ENCODE measurements at regions of chr1 and their contacts with region 1.

Region 1: GRCh38 chr1:110460253-110461220 is 9.6 kb downstream of the PROK1 start:
- DNase-seq: peak; percentile 72
- H3K4me3 Mint-ChIP-seq: no peak overlapping the region
- H3K27ac Mint-ChIP-seq: no peak overlapping the region
- H3K4me1 Mint-ChIP-seq: no peaks in the 10 kb centered on the region
- H3K27me3 Mint-ChIP-seq: no peaks in the 10 kb centered on the region

Region 2: GRCh38 chr1:110312188-110313121 is 148.1 kb before region 1 on chr1:
- intact Hi-C with region 1: loop called (anchors 2 kb)
- DNase-seq: peak; percentile 50
- H3K4me3 Mint-ChIP-seq: no peak overlapping the region
- H3K27ac Mint-ChIP-seq: no peak overlapping the region
- H3K4me1 Mint-ChIP-seq: no peaks in the 10 kb centered on the region
- H3K27me3 Mint-ChIP-seq: no peaks in the 10 kb centered on the region

Region 3: DNA sequence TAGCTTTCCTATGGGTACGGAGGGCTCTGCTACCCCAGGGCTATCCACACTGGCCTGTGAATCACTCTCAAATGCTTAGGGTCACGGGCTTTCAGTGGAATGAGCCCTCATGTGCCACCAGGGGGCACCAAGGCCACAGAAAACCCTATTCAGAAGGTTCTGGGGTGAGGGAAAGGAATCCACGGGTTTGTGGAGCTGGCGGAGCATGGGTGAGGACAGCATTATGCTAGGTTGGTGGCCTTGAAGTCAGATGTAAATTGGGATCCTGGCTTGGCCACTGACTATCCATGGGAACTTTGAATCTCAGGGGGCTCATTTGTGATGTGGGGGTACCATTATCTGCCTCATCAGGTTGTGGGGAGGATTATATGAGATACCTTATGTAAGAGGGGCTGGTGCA is 48.0 kb before region 1 on chr1:
- intact Hi-C with region 1: loop called (anchors 1 kb)
- DNase-seq: peak; percentile 37
- H3K4me3 Mint-ChIP-seq: no peak overlapping the region
- H3K27ac Mint-ChIP-seq: no peak overlapping the region
- H3K4me1 Mint-ChIP-seq: peaks cover 11% of the 10 kb centered on the region
- H3K27me3 Mint-ChIP-seq: no peaks in the 10 kb centered on the region

Region 4: DNA sequence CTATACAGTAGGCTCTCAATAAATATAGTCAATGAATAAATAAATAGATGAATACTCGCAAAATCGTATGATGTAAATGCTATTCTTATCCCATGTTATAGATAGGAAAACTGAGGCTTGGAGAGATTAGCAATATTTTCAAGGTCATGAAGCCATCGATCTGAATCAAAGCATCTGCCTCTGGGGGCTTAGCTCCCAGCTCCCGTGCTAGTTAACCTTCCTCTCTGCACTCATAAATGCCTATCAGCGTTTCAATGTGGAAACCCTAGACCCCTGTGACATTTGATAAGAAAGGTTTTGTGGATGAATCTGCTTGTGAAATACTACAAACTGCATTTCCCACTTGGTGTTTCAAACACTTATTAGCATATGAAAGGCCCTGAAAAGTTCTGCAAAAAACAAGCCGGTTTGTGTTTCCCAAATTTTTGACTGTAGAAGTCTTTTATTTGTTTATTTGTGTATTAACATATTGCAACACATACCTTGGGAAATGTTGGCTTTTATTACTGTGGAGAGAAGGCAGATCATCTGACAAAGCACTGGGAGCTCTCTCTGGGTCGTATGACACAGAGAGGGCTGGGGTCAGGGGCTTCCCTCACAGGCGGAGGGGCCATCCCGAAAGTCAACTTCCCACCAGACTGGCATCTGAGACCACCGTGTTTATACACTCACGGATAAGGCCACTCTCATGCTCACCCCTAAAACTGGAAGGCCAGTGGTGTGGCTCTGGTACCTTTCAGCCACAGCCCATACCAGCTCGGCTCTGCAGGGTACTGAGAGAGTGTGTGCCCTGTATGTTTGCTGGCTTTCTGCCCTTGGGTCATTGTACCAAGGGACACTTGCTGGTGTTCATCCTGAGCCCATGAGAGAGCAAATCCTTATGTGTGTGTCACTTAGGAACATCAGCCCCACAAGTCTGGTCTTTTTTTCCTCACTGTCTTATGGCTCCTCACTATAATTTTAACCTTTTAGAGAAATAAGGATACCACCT is 10.6 kb before region 1 on chr1:
- intact Hi-C with region 1: no loop called
- DNase-seq: no peak
- H3K4me3 Mint-ChIP-seq: no peak overlapping the region
- H3K27ac Mint-ChIP-seq: no peak overlapping the region
- H3K4me1 Mint-ChIP-seq: no peaks in the 10 kb centered on the region
- H3K27me3 Mint-ChIP-seq: peaks cover 17% of the 10 kb centered on the region

Region 5: DNA sequence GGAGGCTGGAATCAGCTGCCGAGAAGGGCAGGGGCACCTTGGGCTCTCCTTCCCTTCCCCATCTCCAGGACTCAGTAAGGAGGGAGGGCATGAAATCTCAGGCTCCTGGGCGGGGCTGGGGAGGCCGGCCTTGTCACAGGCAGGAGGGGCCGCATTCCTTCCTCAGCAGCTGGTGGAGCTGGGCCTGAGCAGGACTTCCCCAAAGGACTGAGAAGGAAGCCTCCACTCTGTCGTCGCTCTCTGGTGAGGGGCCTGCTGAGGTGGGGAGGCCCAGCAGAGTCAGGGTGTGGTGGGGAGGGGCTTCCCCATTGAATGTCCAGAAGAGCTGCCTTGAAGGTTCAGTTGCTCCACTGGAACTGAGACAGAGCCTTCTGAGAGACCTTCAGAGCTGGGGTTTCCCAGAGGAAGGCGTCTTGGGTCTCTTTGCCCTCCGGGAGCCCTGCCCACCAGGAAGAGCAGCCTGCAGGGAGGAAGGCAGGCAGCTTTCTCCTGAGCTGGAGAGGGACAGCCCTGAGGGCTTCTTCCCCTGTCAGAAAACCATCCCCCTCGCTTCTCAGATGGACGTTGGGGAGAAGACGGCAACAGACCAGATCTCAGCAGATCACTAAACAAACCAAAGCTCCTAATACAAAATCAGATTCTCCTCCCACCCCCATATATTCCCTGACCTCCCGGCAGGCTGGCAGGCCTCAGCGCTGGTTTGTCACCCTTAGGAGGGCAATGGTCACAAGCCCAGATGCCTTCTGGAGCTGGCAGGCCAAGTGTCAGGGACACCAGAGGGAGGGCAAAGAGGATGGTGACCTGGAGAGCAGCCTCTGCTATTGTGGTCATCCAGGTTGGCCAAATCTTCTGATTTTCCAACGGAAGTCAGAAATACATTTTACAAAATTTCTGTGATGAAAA is 47.8 kb after region 1 on chr1:
- intact Hi-C with region 1: no loop called
- DNase-seq: no peak
- H3K4me3 Mint-ChIP-seq: no peak overlapping the region
- H3K27ac Mint-ChIP-seq: no peak overlapping the region
- H3K4me1 Mint-ChIP-seq: no peaks in the 10 kb centered on the region
- H3K27me3 Mint-ChIP-seq: peaks cover 7% of the 10 kb centered on the region